ENCODE measurements at regions of chr19 and their contacts with region 1.

Region 1: GRCh38 chr19:3434712-3435553 is 45.4 kb downstream of the SMIM24 start:
- DNase-seq: peak; percentile 86 to 97 (median 94)
- H3K4me3 ChIP-seq: peak overlapping the region; percentile 43 to 90 (median 67)
- H3K27ac ChIP-seq: peak overlapping the region; percentile 70 to 98 (median 92)
- H3K27me3 ChIP-seq: no peaks in the 10 kb centered on the region
- CTCF ChIP-seq: peak in 27 of 56 donors; percentile 6 to 60 (median 27)

Region 2: GRCh38 chr19:3220576-3220975 is 214.4 kb before region 1 on chr19:
- intact Hi-C with region 1: no loop called
- DNase-seq: no peak
- H3K4me3 ChIP-seq: no peak overlapping the region
- H3K27ac ChIP-seq: no peak overlapping the region
- H3K27me3 ChIP-seq: peaks cover 0 to 11% (median 0%) of the 10 kb centered on the region in 45 donors
- CTCF ChIP-seq: no peak

Region 3: DNA sequence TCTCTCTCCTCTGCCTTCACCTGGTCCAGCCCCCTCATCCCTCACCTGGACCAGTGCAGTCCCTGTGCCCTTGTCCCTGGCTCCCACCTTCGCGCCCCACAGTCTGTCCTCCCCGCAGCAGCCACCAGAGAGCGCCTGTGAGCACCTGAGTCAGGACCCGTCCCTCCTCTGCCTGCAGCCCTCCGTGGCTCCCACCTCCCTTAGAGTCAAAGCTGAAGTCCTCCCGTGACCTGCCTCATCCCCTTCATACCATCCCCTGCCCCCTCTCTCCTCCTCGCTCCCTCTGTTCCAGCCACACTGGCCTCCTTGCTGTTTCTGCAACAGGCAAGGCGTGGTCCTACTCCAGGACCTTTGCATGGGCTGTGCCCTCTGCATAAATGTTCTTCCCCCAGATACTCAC is 200.1 kb before region 1 on chr19:
- intact Hi-C with region 1: no loop called
- DNase-seq: no peak
- H3K4me3 ChIP-seq: no peak overlapping the region
- H3K27ac ChIP-seq: peak overlapping the region in 2 of 59 donors; percentile 7 to 13
- H3K27me3 ChIP-seq: no peaks in the 10 kb centered on the region
- CTCF ChIP-seq: peak in 1 of 56 donors; percentile 10

Region 4: GRCh38 chr19:3343619-3344502 is 91.1 kb before region 1 on chr19:
- intact Hi-C with region 1: loop called in 1 of 2 experiments (anchors 5 kb)
- DNase-seq: peak; percentile 57 to 91 (median 84)
- H3K4me3 ChIP-seq: peak overlapping the region in 56 of 59 donors; percentile 6 to 61 (median 42)
- H3K27ac ChIP-seq: peak overlapping the region in 58 of 59 donors; percentile 8 to 92 (median 75)
- H3K27me3 ChIP-seq: no peaks in the 10 kb centered on the region
- CTCF ChIP-seq: peak in 46 of 56 donors; percentile 16 to 61 (median 40)

Region 5: GRCh38 chr19:3403489-3404323 is 31.2 kb before region 1 on chr19:
- intact Hi-C with region 1: no loop called
- DNase-seq: peak; percentile 60 to 85 (median 80)
- H3K4me3 ChIP-seq: peak overlapping the region; percentile 27 to 77 (median 58)
- H3K27ac ChIP-seq: peak overlapping the region; percentile 98 to 100 (median 100)
- H3K27me3 ChIP-seq: no peaks in the 10 kb centered on the region
- CTCF ChIP-seq: peak in 5 of 56 donors; percentile 9 to 20 (median 11)

Region 6: GRCh38 chr19:3471954-3472655 is 37.2 kb after region 1 on chr19:
- intact Hi-C with region 1: loop called in 1 of 2 experiments (anchors 5 kb)
- DNase-seq: peak in 3 of 10 donors; percentile 23 to 57 (median 40)
- H3K4me3 ChIP-seq: peak overlapping the region in 3 of 59 donors; percentile 7 to 40 (median 17)
- H3K27ac ChIP-seq: no peak overlapping the region
- H3K27me3 ChIP-seq: no peaks in the 10 kb centered on the region
- CTCF ChIP-seq: peak; percentile 55 to 96 (median 88)

Region 7: DNA sequence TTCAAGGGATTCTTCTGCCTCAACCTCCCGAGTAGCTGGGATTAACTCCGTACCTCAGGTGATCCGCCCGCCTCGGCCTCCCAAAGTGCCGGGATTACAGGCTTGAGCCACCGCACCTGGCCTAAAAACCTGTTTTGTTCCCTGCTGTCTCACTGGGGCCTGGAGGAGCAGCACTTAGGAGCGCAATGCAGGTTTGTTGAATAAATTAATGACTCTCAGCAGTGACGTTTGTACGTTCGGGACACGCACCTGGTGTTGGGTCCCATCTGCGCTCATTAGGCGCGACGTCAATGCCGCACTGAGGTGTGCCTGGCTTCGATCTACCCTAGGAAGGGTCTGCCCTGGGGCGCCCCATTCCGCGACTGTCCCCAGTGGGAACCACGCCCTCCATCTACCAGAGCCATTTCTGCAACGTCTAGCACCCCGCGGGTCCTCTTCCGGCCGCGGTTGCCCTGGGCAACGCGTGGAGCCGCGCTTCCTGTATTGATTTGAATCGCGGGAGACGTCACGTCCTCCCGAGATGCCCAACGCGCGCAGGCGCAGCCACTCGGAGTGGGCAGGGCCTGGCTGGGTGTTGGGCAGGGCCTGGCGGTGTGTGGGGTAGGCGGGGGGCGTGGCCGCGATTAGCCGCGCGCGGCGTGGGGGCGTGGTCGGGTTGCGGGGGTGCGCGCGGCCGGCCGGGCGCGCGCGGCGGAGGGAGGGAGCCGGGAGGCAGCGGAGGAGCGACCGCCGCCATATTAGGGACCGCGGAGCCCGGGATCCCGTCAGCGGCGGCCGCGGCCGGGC is 70.9 kb after region 1 on chr19 and contains the start of gene FZR1:
- intact Hi-C with region 1: loop called in 1 of 2 experiments (anchors 1 kb)
- DNase-seq: peak; percentile 98 to 100 (median 99)
- H3K4me3 ChIP-seq: peak within 1 kb of the TSS; percentile 74 to 99 (median 91)
- H3K27ac ChIP-seq: peak within 1 kb of the TSS in 55 of 59 donors; percentile 58 to 93 (median 85)
- H3K27me3 ChIP-seq: no peaks in the 10 kb centered on the region
- CTCF ChIP-seq: peak in 26 of 56 donors; percentile 5 to 53 (median 18)
- total RNA-seq, gene FZR1: 46.4 to 99.1 (median 71.7) TPM

Region 8: DNA sequence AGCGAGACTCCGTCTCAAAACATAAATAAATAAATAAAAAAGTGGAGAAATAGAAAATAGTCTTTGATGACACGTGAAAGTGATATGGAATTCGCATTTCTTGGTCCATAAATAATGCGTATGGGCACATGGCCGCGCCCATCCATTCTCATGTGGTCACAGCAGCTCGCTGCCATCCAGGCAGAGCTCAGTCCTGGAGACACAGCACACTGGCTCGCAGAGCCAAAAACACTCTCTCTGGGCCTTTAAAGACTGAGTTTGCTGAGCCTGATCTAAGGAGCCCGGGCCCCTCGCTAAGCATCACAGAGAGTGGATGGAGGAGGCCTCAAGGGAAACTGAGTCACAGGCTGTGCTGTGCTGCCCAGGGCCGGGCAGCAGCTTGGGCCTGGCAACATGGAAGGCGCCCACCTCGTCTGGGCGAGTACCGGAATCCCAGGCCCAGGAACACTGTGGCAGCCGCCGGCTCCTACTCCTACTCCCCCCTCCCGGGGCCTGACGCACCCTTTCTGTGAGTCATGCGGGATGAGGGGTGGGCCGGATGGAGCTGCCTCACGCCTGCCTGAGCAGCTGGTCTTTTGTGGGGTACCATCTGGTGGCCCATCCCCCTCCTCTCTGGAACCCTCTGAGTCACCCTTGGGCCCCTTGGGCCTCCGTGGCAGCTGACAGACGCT is 220.6 kb after region 1 on chr19:
- intact Hi-C with region 1: no loop called
- DNase-seq: peak; percentile 52 to 97 (median 82)
- H3K4me3 ChIP-seq: no peak overlapping the region
- H3K27ac ChIP-seq: peak overlapping the region in 51 of 59 donors; percentile 2 to 89 (median 63)
- H3K27me3 ChIP-seq: no peaks in the 10 kb centered on the region
- CTCF ChIP-seq: no peak

Measured in dorsolateral prefrontal cortex (tissue), 120 donors.